CD8-positive, alpha-beta memory T cell (primary cell): ENCODE measurements at regions of chr19 and their contacts with region 1.

Region 1: GRCh38 chr19:14571695-14572490 is at the start of gene NDUFB7:
- DNase-seq: peak; percentile 83 to 93 (median 88)
- H3K4me3 ChIP-seq: peak within 1 kb of the TSS; percentile 100
- H3K4me3 Mint-ChIP-seq: peak within 1 kb of the TSS; percentile 94 to 98 (median 95)
- H3K27ac ChIP-seq: peak within 1 kb of the TSS; percentile 79
- H3K27ac Mint-ChIP-seq: peak within 1 kb of the TSS; percentile 83 to 99 (median 94)
- H3K4me1 ChIP-seq: peaks cover 25% of the 10 kb centered on the region
- H3K4me1 Mint-ChIP-seq: peaks cover 40 to 53% (median 42%) of the 10 kb centered on the region in 3 donors
- H3K27me3 ChIP-seq: no peaks in the 10 kb centered on the region
- H3K27me3 Mint-ChIP-seq: no peaks in the 10 kb centered on the region
- total RNA-seq, gene NDUFB7: 123 to 126 TPM

Region 2: GRCh38 chr19:14556662-14557188 is 15.2 kb before region 1 on chr19:
- CTCF ChIA-PET with region 1: interaction called, 38 read pairs
- POLR2A ChIA-PET with region 1: interaction called, 4 read pairs
- DNase-seq: peak; percentile 61 to 70 (median 62)
- H3K4me3 ChIP-seq: peak overlapping the region; percentile 35
- H3K4me3 Mint-ChIP-seq: peak overlapping the region; percentile 8 to 82 (median 72)
- H3K27ac ChIP-seq: no peak overlapping the region
- H3K27ac Mint-ChIP-seq: peak overlapping the region in 7 of 8 donors; percentile 68 to 97 (median 92)
- H3K4me1 ChIP-seq: peaks cover 48% of the 10 kb centered on the region
- H3K4me1 Mint-ChIP-seq: peaks cover 31 to 68% (median 44%) of the 10 kb centered on the region in 3 donors
- H3K27me3 ChIP-seq: no peaks in the 10 kb centered on the region
- H3K27me3 Mint-ChIP-seq: no peaks in the 10 kb centered on the region

Region 3: GRCh38 chr19:14595516-14595915 is 23.6 kb after region 1 on chr19:
- CTCF ChIA-PET with region 1: no interaction called
- POLR2A ChIA-PET with region 1: no interaction called
- DNase-seq: no peak
- H3K4me3 ChIP-seq: no peak overlapping the region
- H3K4me3 Mint-ChIP-seq: no peak overlapping the region
- H3K27ac ChIP-seq: no peak overlapping the region
- H3K27ac Mint-ChIP-seq: peak overlapping the region in 1 of 8 donors; percentile 6
- H3K4me1 ChIP-seq: no peaks in the 10 kb centered on the region
- H3K4me1 Mint-ChIP-seq: no peaks in the 10 kb centered on the region
- H3K27me3 ChIP-seq: no peaks in the 10 kb centered on the region
- H3K27me3 Mint-ChIP-seq: peaks cover 9 to 21% of the 10 kb centered on the region in 2 donors

Region 4: DNA sequence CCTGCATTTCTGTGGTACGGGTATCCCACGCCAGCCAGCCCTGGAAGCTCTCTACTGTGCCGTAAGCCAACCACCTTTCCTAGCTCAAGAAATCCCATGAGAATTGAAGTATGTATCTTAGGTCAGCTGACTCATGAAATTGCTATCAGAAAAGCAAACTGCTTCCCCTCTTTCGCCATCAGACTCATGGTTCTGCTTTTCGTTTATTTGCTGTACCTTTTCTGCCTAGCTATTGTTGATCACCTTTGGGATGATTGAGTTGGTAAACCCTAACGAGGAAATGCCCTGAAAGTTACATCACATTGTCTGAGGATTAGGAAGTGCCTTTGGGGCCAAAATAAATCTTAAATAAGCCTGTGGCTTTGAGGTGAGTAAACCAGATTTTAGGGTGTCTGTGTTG is 102.9 kb after region 1 on chr19 and contains the start of gene ADGRE3:
- CTCF ChIA-PET with region 1: no interaction called
- POLR2A ChIA-PET with region 1: no interaction called
- DNase-seq: peak in 1 of 5 donors; percentile 13
- H3K4me3 ChIP-seq: no peak within 1 kb of the TSS
- H3K4me3 Mint-ChIP-seq: peak within 1 kb of the TSS in 4 of 7 donors; percentile 10 to 75 (median 27)
- H3K27ac ChIP-seq: no peak within 1 kb of the TSS
- H3K27ac Mint-ChIP-seq: peak within 1 kb of the TSS in 7 of 8 donors; percentile 43 to 95 (median 83)
- H3K4me1 ChIP-seq: no peaks in the 10 kb centered on the region
- H3K4me1 Mint-ChIP-seq: peaks cover 0 to 24% (median 14%) of the 10 kb centered on the region in 3 donors
- H3K27me3 ChIP-seq: no peaks in the 10 kb centered on the region
- H3K27me3 Mint-ChIP-seq: peaks cover 6 to 43% of the 10 kb centered on the region in 2 donors
- total RNA-seq, gene ADGRE3: not detected

Region 5: GRCh38 chr19:14689598-14690503 is 118.0 kb after region 1 on chr19 and contains the start of gene ZNF333:
- CTCF ChIA-PET with region 1: interaction called, 76 read pairs
- POLR2A ChIA-PET with region 1: no interaction called
- DNase-seq: peak; percentile 96 to 99 (median 97)
- H3K4me3 ChIP-seq: peak within 1 kb of the TSS; percentile 92
- H3K4me3 Mint-ChIP-seq: peak within 1 kb of the TSS; percentile 89 to 99 (median 94)
- H3K27ac ChIP-seq: peak within 1 kb of the TSS; percentile 96
- H3K27ac Mint-ChIP-seq: peak within 1 kb of the TSS; percentile 92 to 100 (median 98)
- H3K4me1 ChIP-seq: peaks cover 12% of the 10 kb centered on the region
- H3K4me1 Mint-ChIP-seq: peaks cover 20 to 29% (median 28%) of the 10 kb centered on the region in 3 donors
- H3K27me3 ChIP-seq: no peaks in the 10 kb centered on the region
- H3K27me3 Mint-ChIP-seq: peaks cover 0 to 2% of the 10 kb centered on the region in 2 donors
- total RNA-seq, gene ZNF333: 9.3 to 10.0 TPM